Activated T-helper 1 cell treated with anti-CD3 and anti-CD28 coated beads, Interleukin-12 subunit alpha, Interleukin-12 subunit beta, Interleukin-2, Interleukin-4 antibody, amounts not matched to agents 30 ng/mL and 10 ng/mL and 1 ng/mL, durations not matched to agents 14 hours and 24 hours and 36 hours (primary cell): ENCODE measurements at regions of chr10 and their contacts with region 1.

Region 1: DNA sequence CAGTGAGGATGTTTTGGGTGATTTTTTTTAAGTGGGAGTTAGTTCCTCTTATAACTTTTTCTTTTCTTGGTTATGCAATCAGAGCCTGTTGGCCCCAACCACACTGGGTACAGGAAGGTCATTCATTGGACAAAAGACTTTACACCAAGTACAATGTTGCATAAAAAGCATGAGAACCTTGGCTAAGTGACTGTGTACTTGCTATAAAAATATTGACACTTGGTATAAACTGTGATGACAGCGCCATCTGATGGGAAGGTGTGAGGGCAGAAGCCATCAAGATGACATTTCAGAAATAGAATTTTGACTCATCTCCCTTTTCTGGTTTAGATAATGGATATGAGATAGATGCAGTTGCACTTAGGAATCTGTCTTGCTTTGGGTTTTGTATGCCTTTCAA is 126.4 kb upstream of the CCDC6 start:
- DNase-seq: no peak
- H3K4me3 Mint-ChIP-seq: no peak overlapping the region
- H3K27ac Mint-ChIP-seq: no peak overlapping the region
- H3K4me1 Mint-ChIP-seq: peaks cover 5% of the 10 kb centered on the region
- H3K27me3 Mint-ChIP-seq: no peaks in the 10 kb centered on the region

Region 2: DNA sequence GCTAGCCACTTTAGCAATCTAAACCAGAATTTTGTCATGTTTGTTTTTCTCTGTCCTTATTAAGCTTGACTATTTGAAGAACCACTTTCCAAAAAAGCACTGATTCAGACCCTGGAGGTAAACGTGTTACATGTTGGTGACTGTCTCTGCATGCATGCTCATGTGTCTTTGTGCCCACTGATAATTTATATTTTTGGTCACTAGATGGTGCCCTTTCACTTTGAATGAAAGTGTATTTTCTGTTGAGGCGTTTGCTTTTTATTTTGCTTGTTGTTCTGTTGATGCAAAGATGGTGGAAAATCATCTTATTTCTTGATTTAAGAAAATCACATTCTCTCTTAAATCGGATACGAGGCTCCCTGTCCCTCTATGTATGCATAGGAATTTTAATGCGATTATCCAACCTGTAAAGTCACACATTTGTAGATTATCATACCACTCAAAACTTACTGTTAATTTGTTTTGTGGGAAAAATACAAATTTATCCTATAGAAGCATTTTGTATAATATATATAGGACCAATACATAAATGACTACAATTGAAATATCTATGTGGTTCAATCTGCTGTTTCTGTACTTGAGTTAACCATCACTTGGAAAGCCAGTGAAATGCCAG is 1250.7 kb before region 1 on chr10:
- intact Hi-C with region 1: loop called (anchors 5 kb)
- DNase-seq: no peak
- H3K4me3 Mint-ChIP-seq: no peak overlapping the region
- H3K27ac Mint-ChIP-seq: no peak overlapping the region
- H3K4me1 Mint-ChIP-seq: no peaks in the 10 kb centered on the region
- H3K27me3 Mint-ChIP-seq: no peaks in the 10 kb centered on the region

Region 3: DNA sequence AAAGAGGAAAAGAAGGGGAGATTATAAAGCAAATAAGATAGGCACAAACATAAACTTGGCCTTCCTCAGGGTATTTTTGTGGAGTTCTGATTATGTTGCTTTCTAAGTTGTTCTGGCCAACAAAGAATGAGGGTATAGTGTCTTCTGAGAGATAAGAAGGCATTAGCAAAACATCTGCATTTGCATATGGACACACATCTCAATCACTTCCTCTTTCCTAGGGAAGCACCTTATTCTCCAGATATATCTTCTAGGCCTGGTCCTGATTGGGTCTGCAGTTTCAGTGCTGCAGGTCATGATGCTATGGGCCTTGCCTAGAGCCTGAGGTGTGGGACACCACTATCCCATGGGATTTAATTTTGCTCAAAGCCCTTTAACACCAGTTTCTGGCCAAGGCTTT is 1165.0 kb before region 1 on chr10:
- intact Hi-C with region 1: no loop called
- DNase-seq: no peak
- H3K4me3 Mint-ChIP-seq: no peak overlapping the region
- H3K27ac Mint-ChIP-seq: no peak overlapping the region
- H3K4me1 Mint-ChIP-seq: no peaks in the 10 kb centered on the region
- H3K27me3 Mint-ChIP-seq: no peaks in the 10 kb centered on the region

Region 4: DNA sequence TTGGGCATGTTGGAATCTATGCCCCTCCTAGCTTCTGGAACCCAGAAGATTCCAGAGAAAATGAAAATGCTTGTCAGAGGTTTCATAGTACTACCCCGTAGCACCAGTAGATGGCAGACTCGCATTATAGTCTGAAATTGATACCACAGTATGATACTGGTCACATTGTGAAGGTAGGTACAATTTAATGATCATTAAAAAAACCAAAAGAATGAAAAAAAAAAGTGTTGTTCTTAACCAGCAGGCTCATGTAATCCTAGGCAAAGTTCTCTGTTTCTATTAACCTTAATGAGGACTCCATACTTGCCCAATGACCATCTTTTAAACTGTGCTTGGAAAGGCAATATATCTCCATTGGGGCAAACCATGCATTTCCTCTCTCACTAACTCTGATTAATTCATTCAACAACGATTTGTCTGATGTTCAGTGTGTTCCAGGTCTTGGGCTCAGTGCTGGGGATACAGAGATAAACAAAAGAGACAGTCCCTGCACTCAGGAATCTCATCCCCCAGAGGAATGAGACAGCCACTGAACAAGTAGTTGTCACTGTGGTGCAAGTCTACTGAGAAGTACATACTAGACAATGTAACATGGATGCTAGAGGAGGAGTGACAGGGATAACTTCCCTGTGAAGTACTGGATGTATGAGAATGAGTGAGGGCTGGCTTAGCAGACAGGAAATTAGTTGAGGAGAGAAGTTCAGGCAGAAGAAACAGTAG is 1079.8 kb before region 1 on chr10:
- intact Hi-C with region 1: loop called (anchors 2 kb)
- DNase-seq: no peak
- H3K4me3 Mint-ChIP-seq: no peak overlapping the region
- H3K27ac Mint-ChIP-seq: no peak overlapping the region
- H3K4me1 Mint-ChIP-seq: no peaks in the 10 kb centered on the region
- H3K27me3 Mint-ChIP-seq: peaks cover 2% of the 10 kb centered on the region

Region 5: DNA sequence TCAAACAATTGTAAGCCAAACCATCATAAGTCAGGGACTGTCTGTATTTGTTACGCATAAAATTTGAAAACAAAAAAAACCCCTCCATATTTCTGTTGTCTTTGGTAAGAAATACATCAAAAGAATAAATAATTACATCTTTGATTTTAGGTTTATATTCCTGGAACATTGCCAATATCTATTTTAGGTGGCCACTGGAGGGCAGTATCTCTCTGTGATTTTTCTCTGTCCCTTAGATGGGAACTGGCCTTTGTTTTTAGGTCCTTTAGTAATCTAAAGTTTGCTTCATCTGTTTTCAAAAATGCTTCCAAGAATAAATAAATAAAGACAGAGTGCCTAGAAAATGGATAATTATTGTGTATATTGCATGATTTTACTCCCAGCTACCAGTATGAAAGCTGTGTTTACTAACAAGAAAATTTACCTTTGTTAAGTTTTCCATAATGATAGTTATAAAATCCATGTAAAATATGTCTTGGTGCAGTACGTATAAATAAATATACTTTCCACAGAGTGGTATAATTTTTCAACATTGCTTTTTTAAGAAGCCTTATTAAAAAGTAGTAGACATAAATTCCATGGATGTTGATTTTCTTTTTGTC is 792.0 kb before region 1 on chr10:
- intact Hi-C with region 1: loop called (anchors 2 kb)
- DNase-seq: no peak
- H3K4me3 Mint-ChIP-seq: no peak overlapping the region
- H3K27ac Mint-ChIP-seq: no peak overlapping the region
- H3K4me1 Mint-ChIP-seq: no peaks in the 10 kb centered on the region
- H3K27me3 Mint-ChIP-seq: peaks cover 2% of the 10 kb centered on the region

Region 6: DNA sequence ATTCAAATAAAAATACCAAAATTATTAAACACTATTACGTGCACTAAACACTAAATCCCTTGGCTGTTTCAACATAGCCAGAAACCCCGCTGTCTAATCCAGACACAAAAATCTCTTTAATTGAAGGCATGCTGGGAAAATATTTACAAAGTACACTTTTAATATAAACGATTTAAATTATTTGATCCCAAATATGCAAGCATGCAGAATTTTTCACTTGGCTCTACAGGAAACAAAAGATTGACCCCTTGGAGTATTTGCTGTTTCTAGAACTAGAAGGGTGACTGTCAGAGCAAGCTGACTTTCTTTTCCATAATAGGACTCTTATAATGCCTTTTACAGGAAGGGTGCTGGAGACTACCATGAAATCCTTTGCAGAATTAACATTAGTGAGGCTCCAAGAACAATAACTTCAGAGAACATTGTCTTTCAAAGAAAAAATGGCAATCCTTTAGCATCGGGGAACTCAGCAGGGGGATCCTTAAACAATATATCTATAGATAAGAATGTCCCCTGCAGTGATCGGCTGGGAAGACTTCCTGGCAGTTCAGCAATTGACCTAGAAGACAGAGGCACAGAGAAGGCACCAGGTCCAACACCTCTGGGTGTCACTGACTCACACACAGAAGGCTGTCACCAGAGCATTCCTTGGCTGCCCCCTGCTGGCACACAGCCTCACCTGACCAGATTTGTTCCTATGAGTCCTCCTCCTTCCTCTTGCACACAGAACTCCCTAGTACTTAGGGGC is 223.7 kb before region 1 on chr10:
- intact Hi-C with region 1: loop called (anchors 5 kb)
- DNase-seq: peak; percentile 56
- H3K4me3 Mint-ChIP-seq: no peak overlapping the region
- H3K27ac Mint-ChIP-seq: no peak overlapping the region
- H3K4me1 Mint-ChIP-seq: peaks cover 5% of the 10 kb centered on the region
- H3K27me3 Mint-ChIP-seq: no peaks in the 10 kb centered on the region

Region 7: GRCh38 chr10:59830601-59831259 is 202.0 kb before region 1 on chr10:
- intact Hi-C with region 1: loop called (anchors 10 kb)
- DNase-seq: no peak
- H3K4me3 Mint-ChIP-seq: no peak overlapping the region
- H3K27ac Mint-ChIP-seq: no peak overlapping the region
- H3K4me1 Mint-ChIP-seq: peaks cover 72% of the 10 kb centered on the region
- H3K27me3 Mint-ChIP-seq: no peaks in the 10 kb centered on the region

Region 8: GRCh38 chr10:59865101-59865500 is 167.6 kb before region 1 on chr10:
- intact Hi-C with region 1: loop called (anchors 1 kb)
- DNase-seq: no peak
- H3K4me3 Mint-ChIP-seq: peak overlapping the region; percentile 20
- H3K27ac Mint-ChIP-seq: peak overlapping the region; percentile 56
- H3K4me1 Mint-ChIP-seq: peaks cover 61% of the 10 kb centered on the region
- H3K27me3 Mint-ChIP-seq: no peaks in the 10 kb centered on the region

Region 9: GRCh38 chr10:60082744-60083344 is 50.1 kb after region 1 on chr10:
- intact Hi-C with region 1: no loop called
- DNase-seq: no peak
- H3K4me3 Mint-ChIP-seq: no peak overlapping the region
- H3K27ac Mint-ChIP-seq: no peak overlapping the region
- H3K4me1 Mint-ChIP-seq: no peaks in the 10 kb centered on the region
- H3K27me3 Mint-ChIP-seq: no peaks in the 10 kb centered on the region